Aorta (tissue), 5 donors: ENCODE measurements at regions of chr15 and their contacts with region 1.

Region 1: GRCh38 chr15:63188926-63189871 is at the start of gene RAB8B:
- DNase-seq: peak; percentile 99 to 100
- ATAC-seq: peak; percentile 99
- H3K4me3 ChIP-seq: peak within 1 kb of the TSS; percentile 71 to 88
- H3K27ac ChIP-seq: peak within 1 kb of the TSS in 1 of 2 donors; percentile 43
- H3K4me1 ChIP-seq: no peaks in the 10 kb centered on the region
- H3K27me3 ChIP-seq: no peaks in the 10 kb centered on the region
- total RNA-seq, gene RAB8B: 40.6 to 47.9 TPM

Region 2: DNA sequence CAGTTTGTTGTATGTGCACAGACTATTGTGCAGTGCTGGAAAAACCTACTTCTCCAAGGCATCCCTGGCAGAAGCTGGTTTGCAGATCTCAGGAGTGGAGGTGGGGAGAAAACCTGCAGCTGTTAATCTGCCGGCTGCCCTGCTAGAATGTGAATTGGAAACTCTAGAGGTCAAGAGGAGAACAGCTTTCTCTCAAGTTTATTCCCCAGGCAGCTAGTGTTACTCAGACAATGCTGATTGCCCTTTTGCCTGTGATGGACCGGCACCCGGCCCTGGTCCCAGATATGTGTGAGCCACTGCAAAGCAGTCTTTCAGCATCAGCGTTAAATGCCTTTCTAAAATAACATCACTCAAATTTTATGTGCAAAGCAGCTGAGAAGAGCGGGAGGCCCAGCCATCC is 276.4 kb before region 1 on chr15:
- intact Hi-C with region 1: no loop called
- DNase-seq: no peak
- ATAC-seq: no peak
- H3K4me3 ChIP-seq: no peak overlapping the region
- H3K27ac ChIP-seq: no peak overlapping the region
- H3K4me1 ChIP-seq: no peaks in the 10 kb centered on the region
- H3K27me3 ChIP-seq: peaks cover 0 to 2% of the 10 kb centered on the region in 2 donors

Region 3: DNA sequence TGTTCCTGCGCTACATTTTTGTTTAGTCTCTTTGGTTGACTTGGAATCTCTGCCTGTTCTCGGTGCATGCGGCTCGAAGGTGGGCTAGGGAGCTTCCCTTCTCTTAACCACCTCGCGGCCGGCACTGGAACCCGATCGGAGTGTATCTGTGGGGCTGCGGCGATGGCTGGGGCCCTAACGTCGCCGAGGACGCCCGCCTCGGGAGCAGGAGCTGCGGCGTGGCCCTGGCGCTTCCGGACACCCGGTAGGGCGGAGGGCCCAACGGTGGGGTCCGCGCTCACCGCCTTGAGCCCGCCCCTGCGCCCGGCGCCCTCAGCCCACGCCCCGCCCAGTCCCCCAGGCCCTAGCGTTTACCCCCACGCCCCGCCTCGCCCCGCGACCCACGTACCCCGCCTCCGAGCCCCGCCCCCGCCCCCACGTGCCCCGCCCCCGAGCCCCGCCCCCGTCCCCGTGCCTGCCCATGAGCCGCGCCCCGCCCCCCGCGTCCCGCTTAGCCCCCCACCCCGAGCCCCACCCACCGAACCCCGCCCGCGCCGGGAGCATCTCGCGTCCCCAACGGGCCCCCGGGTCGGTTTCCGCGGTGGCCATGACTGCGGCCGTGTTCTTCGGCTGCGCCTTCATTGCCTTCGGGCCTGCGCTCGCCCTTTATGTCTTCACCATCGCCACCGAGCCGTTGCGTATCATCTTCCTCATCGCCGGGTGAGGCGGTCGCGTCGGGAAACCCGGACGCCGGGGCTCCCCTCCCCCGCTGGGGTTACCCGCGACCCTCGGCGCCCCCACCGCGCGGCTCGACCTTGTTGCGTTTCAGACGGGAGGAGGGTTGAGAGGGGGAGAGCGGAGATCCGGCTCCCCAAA is 88.1 kb after region 1 on chr15 and contains the start of gene APH1B:
- intact Hi-C with region 1: loop called (anchors 1 to 5 kb)
- DNase-seq: peak; percentile 91 to 95
- ATAC-seq: peak; percentile 93
- H3K4me3 ChIP-seq: peak within 1 kb of the TSS; percentile 80 to 96
- H3K27ac ChIP-seq: peak within 1 kb of the TSS; percentile 46 to 61
- H3K4me1 ChIP-seq: no peaks in the 10 kb centered on the region
- H3K27me3 ChIP-seq: no peaks in the 10 kb centered on the region
- total RNA-seq, gene APH1B: 24.1 to 28.4 TPM